ENCODE measurements at regions of chr1 and their contacts with region 1.

Region 1: GRCh38 chr1:216866714-216867113 is 143.5 kb upstream of the ESRRG start:
- DNase-seq: no peak
- ATAC-seq: no peak
- H3K4me3 ChIP-seq: no peak overlapping the region
- H3K27ac ChIP-seq: no peak overlapping the region
- H3K4me1 ChIP-seq: no peaks in the 10 kb centered on the region
- H3K27me3 ChIP-seq: no peaks in the 10 kb centered on the region
- CTCF ChIP-seq: no peak
- EP300 ChIP-seq: no peak
- POLR2A ChIP-seq: no peak
- RAD21 ChIP-seq: no peak

Region 2: GRCh38 chr1:216686860-216687766 is 179.6 kb before region 1 on chr1:
- CTCF ChIA-PET with region 1: no interaction called
- POLR2A ChIA-PET with region 1: no interaction called
- in situ Hi-C with region 1: no loop called
- intact Hi-C with region 1: no loop called
- DNase-seq: no peak
- ATAC-seq: no peak
- H3K4me3 ChIP-seq: no peak overlapping the region
- H3K27ac ChIP-seq: no peak overlapping the region
- H3K4me1 ChIP-seq: no peaks in the 10 kb centered on the region
- H3K27me3 ChIP-seq: no peaks in the 10 kb centered on the region
- CTCF ChIP-seq: no peak
- EP300 ChIP-seq: no peak
- POLR2A ChIP-seq: no peak
- RAD21 ChIP-seq: no peak

Region 3: DNA sequence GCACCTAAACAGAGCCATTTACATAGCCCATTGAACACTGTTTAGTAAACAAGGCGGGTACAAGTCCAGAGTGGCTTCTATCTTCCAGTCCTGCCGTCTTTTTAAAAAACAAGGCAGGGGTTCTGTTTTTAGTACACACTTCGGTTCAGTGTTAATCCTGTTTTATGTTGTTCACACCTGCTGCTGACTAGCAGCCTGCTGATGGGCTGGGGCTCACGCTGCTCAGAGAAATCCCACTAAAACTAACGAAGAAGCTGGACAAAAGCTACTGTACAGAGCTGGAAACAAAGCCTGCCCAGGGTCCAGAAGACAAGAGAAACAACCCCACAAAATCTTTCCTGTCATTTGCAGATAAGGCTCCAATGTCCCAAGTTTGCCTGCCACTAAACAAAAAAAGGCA is 156.7 kb before region 1 on chr1:
- CTCF ChIA-PET with region 1: no interaction called
- POLR2A ChIA-PET with region 1: no interaction called
- in situ Hi-C with region 1: no loop called
- intact Hi-C with region 1: loop called (anchors 5 kb)
- DNase-seq: no peak
- ATAC-seq: no peak
- H3K4me3 ChIP-seq: no peak overlapping the region
- H3K27ac ChIP-seq: no peak overlapping the region
- H3K4me1 ChIP-seq: no peaks in the 10 kb centered on the region
- H3K27me3 ChIP-seq: no peaks in the 10 kb centered on the region; a peak in 1 of 5 replicates
- CTCF ChIP-seq: no peak
- EP300 ChIP-seq: no peak
- POLR2A ChIP-seq: no peak
- RAD21 ChIP-seq: no peak

Region 4: DNA sequence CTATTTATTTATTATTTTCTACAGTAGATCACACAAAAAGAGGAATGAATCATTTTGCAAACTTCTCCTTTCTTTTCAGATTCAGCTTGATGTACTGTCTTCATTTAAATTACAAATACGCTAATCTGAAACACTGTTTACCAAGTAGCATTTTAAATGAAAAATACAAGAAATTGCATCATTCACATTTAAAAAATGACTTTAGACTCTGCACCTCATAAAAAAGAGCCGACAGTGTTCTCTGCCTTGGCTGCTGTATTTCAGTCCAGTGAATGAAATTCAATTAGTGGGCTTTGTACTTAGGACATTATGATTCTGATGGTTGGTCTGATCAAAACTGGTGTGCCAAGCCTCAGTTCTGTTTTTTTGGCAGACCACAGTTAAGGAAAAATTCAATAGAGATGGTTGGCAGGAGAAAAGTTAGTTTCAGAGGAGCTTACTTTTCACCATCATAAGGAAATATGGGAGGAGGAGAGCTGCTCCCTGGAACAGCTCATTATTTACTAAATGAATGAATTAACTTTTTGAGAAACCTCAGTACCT is 78.9 kb after region 1 on chr1:
- CTCF ChIA-PET with region 1: no interaction called
- POLR2A ChIA-PET with region 1: no interaction called
- in situ Hi-C with region 1: no loop called
- intact Hi-C with region 1: no loop called
- DNase-seq: no peak
- ATAC-seq: no peak
- H3K4me3 ChIP-seq: no peak overlapping the region
- H3K27ac ChIP-seq: no peak overlapping the region
- H3K4me1 ChIP-seq: no peaks in the 10 kb centered on the region
- H3K27me3 ChIP-seq: no peaks in the 10 kb centered on the region
- CTCF ChIP-seq: no peak
- EP300 ChIP-seq: no peak
- POLR2A ChIP-seq: no peak
- RAD21 ChIP-seq: no peak

Region 5: DNA sequence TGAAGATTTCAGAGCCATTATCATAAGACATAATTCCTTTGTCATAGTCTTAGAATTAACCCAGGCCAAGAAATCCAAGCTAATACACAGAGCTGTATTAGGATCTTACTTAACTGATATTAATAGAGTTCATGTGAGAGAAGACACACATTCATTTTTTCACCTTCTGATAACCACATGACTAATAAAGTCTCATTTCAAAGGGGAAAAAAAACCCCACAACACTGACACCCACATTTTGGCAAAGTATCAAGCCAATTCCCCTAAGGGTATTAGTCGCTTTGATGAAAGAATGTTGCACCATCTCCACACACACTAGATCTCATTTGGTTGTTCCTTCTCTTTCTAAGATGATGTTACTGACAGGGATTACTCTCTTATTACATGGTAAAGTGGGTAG is 200.9 kb after region 1 on chr1:
- CTCF ChIA-PET with region 1: no interaction called
- POLR2A ChIA-PET with region 1: no interaction called
- in situ Hi-C with region 1: no loop called
- intact Hi-C with region 1: no loop called
- DNase-seq: no peak
- ATAC-seq: no peak
- H3K4me3 ChIP-seq: no peak overlapping the region
- H3K27ac ChIP-seq: no peak overlapping the region
- H3K4me1 ChIP-seq: no peaks in the 10 kb centered on the region
- H3K27me3 ChIP-seq: no peaks in the 10 kb centered on the region
- CTCF ChIP-seq: no peak
- EP300 ChIP-seq: no peak
- POLR2A ChIP-seq: no peak
- RAD21 ChIP-seq: no peak

Measured in HepG2 (cell line).